ENCODE measurements at regions of chr18 and their contacts with region 1.

Region 1: GRCh38 chr18:80108728-80109675 is at the start of gene ADNP2:
- DNase-seq: peak; percentile 72 to 93 (median 89)
- ATAC-seq: peak; percentile 89
- H3K4me3 ChIP-seq: peak within 1 kb of the TSS; percentile 69
- H3K4me3 Mint-ChIP-seq: peak within 1 kb of the TSS; percentile 72 to 90 (median 86)
- H3K27ac ChIP-seq: peak within 1 kb of the TSS; percentile 85
- H3K27ac Mint-ChIP-seq: peak within 1 kb of the TSS; percentile 59 to 97 (median 93)
- H3K4me1 ChIP-seq: peaks cover 14 to 19% of the 10 kb centered on the region in 2 donors
- H3K4me1 Mint-ChIP-seq: peaks cover 23 to 58% (median 44%) of the 10 kb centered on the region in 7 donors
- H3K27me3 ChIP-seq: no peaks in the 10 kb centered on the region
- H3K27me3 Mint-ChIP-seq: peaks cover 0 to 3% (median 0%) of the 10 kb centered on the region in 5 donors
- total RNA-seq, gene ADNP2: 18.4 to 41.4 (median 25.3) TPM

Region 2: DNA sequence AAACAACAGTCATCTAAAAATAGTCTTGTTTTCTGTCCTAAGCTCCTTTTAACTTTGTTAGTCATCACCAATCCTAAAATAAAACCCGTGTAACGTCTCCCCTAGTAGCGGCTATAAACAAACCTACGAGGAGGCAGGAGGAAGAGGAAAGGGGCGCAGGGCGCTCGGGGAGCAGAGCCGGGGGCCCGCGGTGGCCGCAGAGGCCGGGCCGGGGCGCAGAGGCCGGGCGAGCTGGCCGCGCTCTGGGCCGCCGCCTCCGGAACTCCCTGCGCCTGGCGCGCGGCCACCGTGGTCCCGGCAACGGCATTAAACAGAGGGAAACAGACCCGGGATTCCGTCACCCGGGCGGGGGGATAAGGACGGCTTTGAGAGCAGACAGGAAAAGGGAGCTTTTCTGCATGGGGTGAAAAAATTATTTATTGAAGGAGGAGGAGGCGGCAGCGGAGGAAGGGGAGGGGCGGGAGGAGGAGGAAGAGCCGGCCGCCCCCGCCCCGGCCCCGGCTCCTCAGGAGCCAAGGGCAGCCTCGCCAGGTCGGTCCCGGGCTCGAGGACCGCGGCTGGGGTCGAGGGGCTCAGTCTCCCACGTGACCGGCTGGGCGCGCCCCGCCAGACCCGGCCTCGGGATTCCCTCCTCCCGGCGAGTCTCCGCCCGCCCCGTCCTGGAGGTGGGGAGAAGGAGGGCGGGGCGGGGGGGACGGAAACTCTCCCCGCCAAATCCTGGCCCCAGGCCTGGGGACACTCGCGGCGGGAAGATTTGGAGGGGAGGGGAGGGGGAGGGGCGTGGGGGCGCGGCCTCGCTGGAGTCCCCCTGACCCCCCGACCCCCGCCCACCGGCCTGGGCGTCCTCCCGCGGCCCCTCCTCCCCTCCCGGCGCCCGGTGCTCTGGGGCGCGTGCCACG is 715.1 kb before region 1 on chr18:
- CTCF ChIA-PET with region 1: no interaction called
- POLR2A ChIA-PET with region 1: no interaction called
- intact Hi-C with region 1: loop called (anchors 5 to 10 kb)
- DNase-seq: peak in 6 of 9 donors; percentile 47 to 67 (median 54)
- ATAC-seq: peak; percentile 45
- H3K4me3 ChIP-seq: peak overlapping the region; percentile 59
- H3K4me3 Mint-ChIP-seq: peak overlapping the region; percentile 81 to 94 (median 91)
- H3K27ac ChIP-seq: peak overlapping the region; percentile 63
- H3K27ac Mint-ChIP-seq: peak overlapping the region; percentile 67 to 91 (median 85)
- H3K4me1 ChIP-seq: peaks cover 14 to 20% of the 10 kb centered on the region in 2 donors
- H3K4me1 Mint-ChIP-seq: peaks cover 15 to 61% (median 48%) of the 10 kb centered on the region in 7 donors
- H3K27me3 ChIP-seq: peaks cover 0 to 6% of the 10 kb centered on the region in 2 donors
- H3K27me3 Mint-ChIP-seq: peaks cover 0 to 39% (median 0%) of the 10 kb centered on the region in 5 donors

Region 3: GRCh38 chr18:79988451-79989194 is 120.4 kb before region 1 on chr18 and contains the start of gene TXNL4A:
- CTCF ChIA-PET with region 1: no interaction called
- POLR2A ChIA-PET with region 1: no interaction called
- intact Hi-C with region 1: loop called (anchors 1 kb)
- DNase-seq: peak; percentile 76 to 88 (median 84)
- ATAC-seq: peak; percentile 97
- H3K4me3 ChIP-seq: peak within 1 kb of the TSS; percentile 94
- H3K4me3 Mint-ChIP-seq: peak within 1 kb of the TSS; percentile 80 to 97 (median 92)
- H3K27ac ChIP-seq: peak within 1 kb of the TSS; percentile 93
- H3K27ac Mint-ChIP-seq: peak within 1 kb of the TSS; percentile 85 to 98 (median 95)
- H3K4me1 ChIP-seq: peaks cover 20 to 27% of the 10 kb centered on the region in 2 donors
- H3K4me1 Mint-ChIP-seq: peaks cover 30 to 45% (median 38%) of the 10 kb centered on the region in 7 donors
- H3K27me3 ChIP-seq: no peaks in the 10 kb centered on the region
- H3K27me3 Mint-ChIP-seq: peaks cover 0 to 5% (median 0%) of the 10 kb centered on the region in 5 donors
- total RNA-seq, gene TXNL4A: 56.9 to 107 (median 69.7) TPM

Region 4: GRCh38 chr18:80132180-80132812 is 23.3 kb after region 1 on chr18:
- CTCF ChIA-PET with region 1: no interaction called
- POLR2A ChIA-PET with region 1: no interaction called
- intact Hi-C with region 1: loop called in 1 of 2 experiments (anchors 2 kb)
- DNase-seq: no peak
- ATAC-seq: no peak
- H3K4me3 ChIP-seq: no peak overlapping the region
- H3K4me3 Mint-ChIP-seq: peak overlapping the region in 1 of 10 donors; percentile 23
- H3K27ac ChIP-seq: no peak overlapping the region
- H3K27ac Mint-ChIP-seq: peak overlapping the region in 2 of 9 donors; percentile 29 to 47
- H3K4me1 ChIP-seq: no peaks in the 10 kb centered on the region
- H3K4me1 Mint-ChIP-seq: peaks cover 12 to 41% (median 34%) of the 10 kb centered on the region in 7 donors
- H3K27me3 ChIP-seq: no peaks in the 10 kb centered on the region
- H3K27me3 Mint-ChIP-seq: no peaks in the 10 kb centered on the region

Region 5: DNA sequence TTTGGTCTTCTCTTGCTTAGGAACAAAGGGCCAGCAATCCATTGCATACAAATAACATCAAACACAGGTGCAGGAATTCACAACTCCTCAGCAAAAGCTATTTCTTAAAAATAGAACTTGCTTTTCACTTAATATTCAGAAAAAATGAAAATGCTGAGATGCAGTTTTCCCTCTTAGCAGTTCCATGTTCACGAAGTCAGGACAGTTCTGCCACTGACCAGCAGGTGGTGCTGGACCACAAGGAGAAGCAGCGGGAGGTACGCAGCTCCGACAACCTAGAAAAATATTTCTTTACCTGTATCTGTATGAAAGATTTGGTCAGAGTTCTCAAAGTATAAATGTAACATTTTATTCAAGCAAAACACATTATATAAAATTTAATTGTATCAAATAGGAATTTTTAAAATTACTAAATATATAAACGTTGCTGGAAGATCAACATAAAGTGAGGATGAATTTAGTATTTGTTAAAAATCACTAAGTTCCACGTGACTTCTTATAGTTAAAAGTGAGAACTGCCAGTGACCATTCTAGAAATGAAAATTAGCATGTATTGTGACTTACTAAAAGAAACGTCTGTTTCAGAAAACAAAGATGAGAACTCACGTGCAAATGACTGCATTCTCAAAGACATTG is 48.8 kb after region 1 on chr18:
- CTCF ChIA-PET with region 1: no interaction called
- POLR2A ChIA-PET with region 1: no interaction called
- intact Hi-C with region 1: loop called in 1 of 2 experiments (anchors 2 kb)
- DNase-seq: peak in 8 of 9 donors; percentile 39 to 68 (median 54)
- ATAC-seq: peak; percentile 75
- H3K4me3 ChIP-seq: no peak overlapping the region
- H3K4me3 Mint-ChIP-seq: no peak overlapping the region
- H3K27ac ChIP-seq: no peak overlapping the region
- H3K27ac Mint-ChIP-seq: no peak overlapping the region
- H3K4me1 ChIP-seq: no peaks in the 10 kb centered on the region
- H3K4me1 Mint-ChIP-seq: peaks cover 0 to 4% (median 0%) of the 10 kb centered on the region in 7 donors
- H3K27me3 ChIP-seq: no peaks in the 10 kb centered on the region
- H3K27me3 Mint-ChIP-seq: peaks cover 0 to 31% (median 18%) of the 10 kb centered on the region in 5 donors